ENCODE measurements at regions of chr16 and their contacts with region 1.

Region 1: DNA sequence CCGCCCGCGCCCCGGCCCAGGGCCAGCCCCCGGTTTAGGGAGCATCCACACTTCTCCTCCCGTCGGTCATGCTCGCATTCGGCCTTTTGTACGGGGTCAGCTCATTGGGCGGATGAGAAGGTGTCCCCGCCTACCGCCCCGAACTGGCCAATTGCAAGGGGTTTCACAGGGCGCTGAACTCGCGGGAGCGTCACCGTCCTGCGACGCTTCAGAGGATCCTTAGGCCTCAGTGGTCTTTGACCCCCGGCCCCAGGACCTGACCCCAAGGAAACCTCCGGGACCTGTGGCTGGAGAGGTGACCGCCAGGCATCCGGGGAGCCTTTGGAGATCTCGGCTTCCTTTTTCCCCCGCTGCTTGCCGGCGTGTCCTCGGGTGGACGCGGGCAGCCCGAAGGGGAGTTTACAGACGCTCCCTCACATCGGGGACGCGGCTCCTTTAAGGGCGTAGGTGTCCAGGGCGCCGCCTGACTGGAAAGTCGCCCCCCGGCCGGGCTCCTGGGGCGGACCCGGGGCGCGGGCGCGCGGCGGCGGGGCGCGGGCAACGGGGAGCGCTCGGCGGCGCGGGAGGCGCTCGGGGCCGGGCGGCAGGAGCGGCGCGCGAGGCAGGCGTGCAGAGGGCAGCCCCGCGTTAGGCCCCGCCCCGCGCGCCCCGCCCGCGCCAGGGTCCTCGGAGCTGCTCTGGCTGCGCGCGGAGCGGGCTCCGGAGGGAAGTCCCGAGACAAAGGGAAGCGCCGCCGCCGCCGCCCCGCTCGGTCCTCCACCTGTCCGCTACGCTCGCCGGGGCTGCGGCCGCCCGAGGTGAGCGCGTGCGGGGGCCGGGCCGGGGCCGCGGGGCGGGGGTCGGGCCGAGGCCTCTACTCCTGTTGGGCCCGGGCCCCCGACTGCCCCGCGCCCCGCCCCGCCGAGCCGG is at the start of gene UBE2I:
- DNase-seq: peak; percentile 98
- H3K4me3 Mint-ChIP-seq: peak within 1 kb of the TSS; percentile 95
- H3K27ac Mint-ChIP-seq: peak within 1 kb of the TSS; percentile 100
- H3K4me1 Mint-ChIP-seq: peaks cover 20% of the 10 kb centered on the region
- H3K27me3 Mint-ChIP-seq: peaks cover 2% of the 10 kb centered on the region
- total RNA-seq, gene UBE2I: 257 TPM in 2 replicates

Region 2: GRCh38 chr16:1331712-1332617 is 22.7 kb after region 1 on chr16:
- intact Hi-C with region 1: loop called (anchors 2 kb)
- DNase-seq: peak; percentile 63
- H3K4me3 Mint-ChIP-seq: peak overlapping the region; percentile 54
- H3K27ac Mint-ChIP-seq: peak overlapping the region; percentile 68
- H3K4me1 Mint-ChIP-seq: peaks cover 6% of the 10 kb centered on the region
- H3K27me3 Mint-ChIP-seq: peaks cover 29% of the 10 kb centered on the region

Region 3: GRCh38 chr16:1342526-1343427 is 33.5 kb after region 1 on chr16:
- intact Hi-C with region 1: loop called (anchors 1 kb)
- DNase-seq: peak; percentile 89
- H3K4me3 Mint-ChIP-seq: peak overlapping the region; percentile 45
- H3K27ac Mint-ChIP-seq: peak overlapping the region; percentile 18
- H3K4me1 Mint-ChIP-seq: peaks cover 15% of the 10 kb centered on the region
- H3K27me3 Mint-ChIP-seq: peaks cover 2% of the 10 kb centered on the region

Region 4: GRCh38 chr16:1351582-1352362 is 42.5 kb after region 1 on chr16 and contains the starts of genes GNPTG and TSR3:
- intact Hi-C with region 1: loop called (anchors 1 kb)
- DNase-seq: peak; percentile 89
- H3K4me3 Mint-ChIP-seq: peak within 1 kb of the TSS; percentile 90
- H3K27ac Mint-ChIP-seq: peak within 1 kb of the TSS; percentile 83
- H3K4me1 Mint-ChIP-seq: peaks cover 18% of the 10 kb centered on the region
- H3K27me3 Mint-ChIP-seq: peaks cover 3% of the 10 kb centered on the region
- total RNA-seq, gene GNPTG: 21.4 and 22.5 TPM in 2 replicates
- total RNA-seq, gene TSR3: 87.4 and 89.4 TPM in 2 replicates

Region 5: GRCh38 chr16:1533443-1533951 is 224.3 kb after region 1 on chr16 and contains the start of gene TMEM204:
- intact Hi-C with region 1: loop called (anchors 10 kb)
- DNase-seq: peak; percentile 47
- H3K4me3 Mint-ChIP-seq: peak within 1 kb of the TSS; percentile 98
- H3K27ac Mint-ChIP-seq: peak within 1 kb of the TSS; percentile 92
- H3K4me1 Mint-ChIP-seq: peaks cover 44% of the 10 kb centered on the region
- H3K27me3 Mint-ChIP-seq: peaks cover 2% of the 10 kb centered on the region
- total RNA-seq, gene TMEM204: 22.8 and 23.7 TPM in 2 replicates